Right ventricle myocardium inferior (tissue), 1 donor: ENCODE measurements at regions of chr13 and their contacts with region 1.

Region 1: DNA sequence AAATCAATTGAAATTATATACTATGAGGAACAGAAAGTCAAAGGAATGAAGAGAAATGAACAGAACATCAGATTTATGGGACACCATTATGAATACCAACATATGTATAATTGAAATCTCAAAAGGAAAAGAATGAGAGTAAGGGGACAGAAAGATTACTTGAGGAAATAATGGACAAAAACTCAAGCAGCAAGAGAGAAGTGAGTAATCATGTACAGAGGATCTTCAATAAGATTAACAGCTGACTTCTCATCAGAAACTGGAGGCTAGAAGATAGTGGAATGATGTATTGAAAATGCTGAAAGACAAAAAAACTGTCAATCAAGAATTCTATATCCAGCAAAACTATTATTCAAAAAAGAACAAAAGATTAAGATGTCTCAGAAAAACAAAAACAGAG is 10.4 kb downstream of the MTUS2 start:
- DNase-seq: no peak
- ATAC-seq: no peak

Region 2: DNA sequence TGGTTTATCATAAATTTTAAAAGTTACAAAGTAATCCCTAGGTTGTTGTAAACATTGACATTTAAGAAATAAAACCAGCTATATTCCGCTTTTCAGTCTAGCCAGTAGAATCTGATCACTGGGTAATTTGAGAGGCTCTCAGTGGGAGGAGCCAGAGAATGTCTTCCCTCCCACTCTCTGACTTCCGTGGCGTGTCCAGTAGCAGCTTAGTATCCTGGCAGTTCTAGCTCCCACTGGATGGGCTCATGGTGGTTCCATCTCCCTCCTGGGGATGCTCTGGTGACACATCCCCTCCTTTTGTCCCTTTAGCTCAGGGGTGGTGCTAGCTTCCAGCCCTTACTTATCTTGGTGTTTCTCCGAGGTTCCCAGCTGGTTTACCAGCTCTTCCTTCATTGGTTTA is 24.1 kb after region 1 on chr13:
- intact Hi-C with region 1: loop called (anchors 1 kb)
- DNase-seq: no peak
- ATAC-seq: no peak

Region 3: GRCh38 chr13:29435125-29435911 is 604.7 kb after region 1 on chr13:
- intact Hi-C with region 1: no loop called
- DNase-seq: no peak
- ATAC-seq: peak; percentile 89